ENCODE measurements at regions of chr11 and their contacts with region 1.

Region 1: DNA sequence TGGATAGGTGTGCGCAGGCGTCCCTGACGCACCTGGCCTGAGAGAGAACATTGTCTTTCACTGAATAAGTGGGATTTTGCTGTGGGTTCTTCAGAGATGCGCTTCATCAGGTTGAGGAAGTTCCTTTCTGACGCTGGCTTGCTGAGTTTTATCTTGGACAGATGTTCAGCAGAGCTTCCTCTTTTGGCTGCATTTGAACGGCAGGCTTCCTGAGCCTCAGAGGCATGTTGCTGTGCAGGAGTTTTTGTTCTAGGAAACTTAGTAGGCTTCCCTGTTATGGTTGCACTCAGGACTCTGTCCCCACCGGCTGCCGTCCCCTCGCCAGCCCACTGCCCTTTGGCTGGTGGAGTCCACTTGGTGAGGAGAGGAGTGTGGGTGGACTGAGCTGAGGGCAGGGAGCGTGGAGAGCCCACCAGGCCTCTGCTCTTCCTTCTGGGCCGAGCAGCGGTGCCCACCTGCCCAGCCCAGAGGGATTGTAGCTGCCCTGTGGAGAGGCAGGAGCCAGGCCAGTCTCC is 17.2 kb downstream of the FRMD8 start:
- DNase-seq: no peak
- H3K4me3 ChIP-seq: no peak overlapping the region
- CTCF ChIP-seq: no peak

Region 2: DNA sequence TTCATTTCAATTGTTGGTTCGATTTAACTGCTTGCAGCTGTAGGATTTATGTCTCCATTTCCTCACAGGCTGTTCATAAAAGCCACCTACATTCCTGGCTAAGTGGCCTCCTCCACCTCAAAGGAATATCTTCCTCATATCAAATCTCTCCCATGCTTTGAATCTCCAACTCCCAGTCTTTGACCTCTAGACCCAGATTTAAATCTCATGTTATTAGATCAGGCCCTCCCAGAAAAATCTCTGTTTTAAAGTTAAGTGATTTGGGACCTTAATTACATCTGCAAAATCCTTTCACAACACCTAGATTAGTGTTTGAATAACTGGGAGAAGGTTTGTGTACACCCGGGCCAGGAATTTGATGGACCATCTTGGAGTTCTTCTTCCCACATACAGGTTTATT is 175.8 kb before region 1 on chr11:
- CTCF ChIA-PET with region 1: no interaction called
- POLR2A ChIA-PET with region 1: no interaction called
- DNase-seq: no peak
- H3K4me3 ChIP-seq: no peak overlapping the region
- CTCF ChIP-seq: no peak

Region 3: GRCh38 chr11:65391007-65391406 is 12.7 kb before region 1 on chr11:
- CTCF ChIA-PET with region 1: interaction called, 13 read pairs
- POLR2A ChIA-PET with region 1: interaction called, 6 read pairs
- DNase-seq: no peak
- H3K4me3 ChIP-seq: peak overlapping the region; percentile 40
- CTCF ChIP-seq: no peak

Measured in AG04449 (cell line).